ENCODE measurements at regions of chr13 and their contacts with region 1.

Region 1: DNA sequence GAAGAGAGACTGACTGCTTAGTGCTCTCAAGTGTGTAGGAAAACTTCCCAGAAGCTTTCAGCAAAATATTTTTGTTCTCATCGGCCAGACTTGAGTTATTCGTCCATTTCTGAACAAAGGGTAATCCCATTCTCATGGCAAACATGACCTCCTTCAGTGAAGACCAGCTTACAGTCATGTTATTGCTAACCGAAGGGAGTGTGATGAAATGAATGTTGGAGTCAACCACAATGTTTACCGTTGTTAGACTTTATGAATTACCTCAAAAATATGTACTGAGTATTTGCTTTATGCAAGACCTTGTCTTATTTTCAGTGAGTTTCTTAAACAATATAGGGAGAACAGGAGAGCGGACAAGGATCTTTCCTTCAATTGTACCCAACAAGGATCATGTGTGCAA is 228.6 kb downstream of the LMO7 start:
- DNase-seq: no peak
- H3K4me3 ChIP-seq: no peak overlapping the region
- H3K27ac ChIP-seq: no peak overlapping the region
- H3K4me1 ChIP-seq: no peaks in the 10 kb centered on the region
- H3K27me3 ChIP-seq: no peaks in the 10 kb centered on the region
- CTCF ChIP-seq: no peak
- POLR2A ChIP-seq: no peak

Region 2: GRCh38 chr13:76461999-76462398 is 597.3 kb after region 1 on chr13:
- intact Hi-C with region 1: no loop called
- DNase-seq: no peak
- H3K4me3 ChIP-seq: no peak overlapping the region
- H3K27ac ChIP-seq: no peak overlapping the region
- H3K4me1 ChIP-seq: no peaks in the 10 kb centered on the region
- H3K27me3 ChIP-seq: no peaks in the 10 kb centered on the region
- CTCF ChIP-seq: no peak
- POLR2A ChIP-seq: no peak

Region 3: GRCh38 chr13:76965759-76966421 is 1101.2 kb after region 1 on chr13:
- intact Hi-C with region 1: loop called (anchors 5 kb)
- DNase-seq: no peak
- H3K4me3 ChIP-seq: no peak overlapping the region
- H3K27ac ChIP-seq: no peak overlapping the region
- H3K4me1 ChIP-seq: no peaks in the 10 kb centered on the region
- H3K27me3 ChIP-seq: no peaks in the 10 kb centered on the region
- CTCF ChIP-seq: no peak
- POLR2A ChIP-seq: no peak